ENCODE measurements at regions of chr7 and their contacts with region 1.

Region 1: GRCh38 chr7:33109005-33109757 is at the start of gene RP9:
- DNase-seq: peak; percentile 76
- H3K4me3 Mint-ChIP-seq: peak within 1 kb of the TSS; percentile 91
- H3K27ac Mint-ChIP-seq: peak within 1 kb of the TSS; percentile 70
- H3K4me1 Mint-ChIP-seq: peaks cover 36% of the 10 kb centered on the region
- H3K27me3 Mint-ChIP-seq: peaks cover 39% of the 10 kb centered on the region

Region 2: DNA sequence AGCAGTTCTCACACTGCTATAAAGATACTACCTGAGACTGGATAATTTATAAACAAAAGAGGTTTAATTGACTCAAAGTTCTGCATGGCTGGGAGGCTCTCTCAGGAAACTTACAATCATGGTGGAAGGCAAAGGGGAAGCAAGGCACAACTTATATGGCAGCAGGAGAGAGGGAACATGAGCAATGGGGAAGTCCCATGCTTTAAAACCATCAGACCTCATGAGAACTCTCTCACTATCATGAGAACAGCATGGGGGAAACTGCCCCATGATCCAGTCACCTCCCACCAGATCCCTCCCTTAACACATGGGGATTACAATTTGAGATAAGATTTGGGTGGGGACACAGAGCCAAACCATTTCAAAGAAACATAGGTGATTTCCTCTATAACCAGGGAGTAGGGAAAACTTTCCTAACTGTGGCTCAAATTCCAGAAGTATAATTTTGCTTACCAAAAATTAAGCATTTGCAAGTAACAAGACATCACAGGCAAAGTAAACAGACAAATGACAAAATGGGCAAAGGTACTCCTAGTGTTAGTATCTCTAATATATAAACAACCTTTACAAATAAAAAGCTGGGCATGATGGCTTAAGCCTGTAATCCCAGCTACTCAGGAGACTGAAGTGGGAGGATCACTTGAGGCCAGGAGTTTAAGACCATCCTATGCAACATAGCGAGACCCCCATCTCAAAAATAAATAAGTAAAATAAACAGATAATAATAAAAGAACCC is 305.6 kb before region 1 on chr7:
- CTCF ChIA-PET with region 1: interaction called, 21 read pairs
- DNase-seq: no peak
- H3K4me3 Mint-ChIP-seq: no peak overlapping the region
- H3K27ac Mint-ChIP-seq: no peak overlapping the region
- H3K4me1 Mint-ChIP-seq: no peaks in the 10 kb centered on the region
- H3K27me3 Mint-ChIP-seq: peaks cover 3% of the 10 kb centered on the region

Region 3: GRCh38 chr7:32942786-32943653 is 166.2 kb before region 1 on chr7:
- CTCF ChIA-PET with region 1: interaction called, 15 read pairs
- DNase-seq: peak; percentile 75
- H3K4me3 Mint-ChIP-seq: peak overlapping the region; percentile 90
- H3K27ac Mint-ChIP-seq: peak overlapping the region; percentile 64
- H3K4me1 Mint-ChIP-seq: peaks cover 14% of the 10 kb centered on the region
- H3K27me3 Mint-ChIP-seq: peaks cover 18% of the 10 kb centered on the region

Region 4: GRCh38 chr7:32958046-32959025 is 150.8 kb before region 1 on chr7:
- CTCF ChIA-PET with region 1: interaction called, 13 read pairs
- DNase-seq: no peak
- H3K4me3 Mint-ChIP-seq: peak overlapping the region; percentile 68
- H3K27ac Mint-ChIP-seq: no peak overlapping the region
- H3K4me1 Mint-ChIP-seq: peaks cover 7% of the 10 kb centered on the region
- H3K27me3 Mint-ChIP-seq: peaks cover 69% of the 10 kb centered on the region

Region 5: GRCh38 chr7:33009734-33010133 is 99.4 kb before region 1 on chr7:
- CTCF ChIA-PET with region 1: no interaction called
- DNase-seq: no peak
- H3K4me3 Mint-ChIP-seq: no peak overlapping the region
- H3K27ac Mint-ChIP-seq: no peak overlapping the region
- H3K4me1 Mint-ChIP-seq: no peaks in the 10 kb centered on the region
- H3K27me3 Mint-ChIP-seq: no peaks in the 10 kb centered on the region

Region 6: GRCh38 chr7:33040803-33041516 is 68.2 kb before region 1 on chr7:
- CTCF ChIA-PET with region 1: interaction called, 10 read pairs
- DNase-seq: peak; percentile 80
- H3K4me3 Mint-ChIP-seq: peak overlapping the region; percentile 74
- H3K27ac Mint-ChIP-seq: peak overlapping the region; percentile 89
- H3K4me1 Mint-ChIP-seq: peaks cover 52% of the 10 kb centered on the region
- H3K27me3 Mint-ChIP-seq: no peaks in the 10 kb centered on the region

Region 7: GRCh38 chr7:33143996-33144718 is 35.0 kb after region 1 on chr7:
- CTCF ChIA-PET with region 1: no interaction called
- DNase-seq: no peak
- H3K4me3 Mint-ChIP-seq: no peak overlapping the region
- H3K27ac Mint-ChIP-seq: no peak overlapping the region
- H3K4me1 Mint-ChIP-seq: peaks cover 5% of the 10 kb centered on the region
- H3K27me3 Mint-ChIP-seq: no peaks in the 10 kb centered on the region

Measured in activated naive CD4-positive, alpha-beta T cell treated with anti-CD3 and anti-CD28 coated beads, Interleukin-2, amount 10 ng/mL, durations not matched to agents 7 days and 5 days (primary cell).